Endothelial cell of umbilical vein (primary cell): ENCODE measurements at regions of chr12 and their contacts with region 1.

Region 1: GRCh38 chr12:53321074-53321814 is at the start of gene AAAS:
- DNase-seq: peak; percentile 97
- H3K4me3 ChIP-seq: peak within 1 kb of the TSS; percentile 65 to 81 (median 68)
- H3K27ac ChIP-seq: peak within 1 kb of the TSS; percentile 74
- H3K4me1 ChIP-seq: peaks cover 24% of the 10 kb centered on the region
- H3K27me3 ChIP-seq: no peaks in the 10 kb centered on the region
- CTCF ChIP-seq: peak; percentile 99 to 100
- POLR2A ChIP-seq: peak; percentile 69
- total RNA-seq, gene AAAS: 57.8 and 60.0 TPM in 2 replicates

Region 2: DNA sequence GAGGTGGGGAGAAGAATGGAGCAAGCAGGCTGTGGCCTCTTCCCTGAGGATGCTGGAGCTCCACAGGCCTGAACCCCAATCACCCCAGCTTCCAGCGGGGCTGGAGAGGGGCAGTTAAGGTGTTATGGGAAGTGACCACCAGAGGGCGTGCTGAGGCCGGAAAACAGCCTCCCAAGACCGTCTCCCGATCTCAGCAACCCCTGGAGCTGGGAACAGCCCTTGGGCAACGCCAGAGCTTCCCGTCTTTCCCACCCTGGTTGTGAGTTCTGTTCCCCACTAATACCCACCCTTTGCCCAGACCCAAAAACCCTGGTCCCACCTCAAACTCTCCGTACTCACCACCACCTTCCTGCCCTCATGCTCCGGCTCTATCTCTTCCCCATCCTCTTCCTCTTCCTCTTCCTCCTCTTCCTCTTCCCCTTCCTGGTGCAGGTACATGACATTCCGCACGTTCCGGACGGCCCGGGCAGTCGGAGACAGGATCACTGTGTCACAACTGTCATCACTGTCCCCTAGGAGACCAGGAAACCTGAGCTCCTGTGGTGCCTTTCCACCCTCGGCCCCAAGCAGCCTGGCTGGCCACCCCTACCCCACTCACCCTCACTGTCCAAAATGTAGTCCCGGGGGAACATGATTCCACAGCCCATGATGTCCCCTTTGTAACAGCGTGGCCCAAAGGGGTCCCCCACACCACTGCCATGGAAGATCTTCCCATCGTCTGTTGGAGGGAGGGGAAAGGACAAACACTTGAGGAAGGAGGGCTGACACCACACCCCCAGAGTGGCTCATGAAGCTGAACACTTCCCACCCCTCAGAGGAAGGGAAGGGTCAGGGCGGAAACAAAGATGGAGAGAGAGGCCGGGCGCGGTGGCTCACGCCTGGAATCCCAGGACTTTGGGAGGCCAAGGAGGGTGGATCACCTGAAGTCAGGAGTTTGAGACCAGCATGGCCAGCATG is 255.0 kb before region 1 on chr12:
- CTCF ChIA-PET with region 1: interaction called, 16 read pairs
- POLR2A ChIA-PET with region 1: no interaction called
- dilution Hi-C with region 1: no loop called
- intact Hi-C with region 1: no loop called
- DNase-seq: peak; percentile 65
- H3K4me3 ChIP-seq: no peak overlapping the region
- H3K27ac ChIP-seq: peak overlapping the region; percentile 44
- H3K4me1 ChIP-seq: peaks cover 22% of the 10 kb centered on the region
- H3K27me3 ChIP-seq: no peaks in the 10 kb centered on the region
- CTCF ChIP-seq: peak; percentile 85 to 90
- POLR2A ChIP-seq: peak; percentile 39

Region 3: DNA sequence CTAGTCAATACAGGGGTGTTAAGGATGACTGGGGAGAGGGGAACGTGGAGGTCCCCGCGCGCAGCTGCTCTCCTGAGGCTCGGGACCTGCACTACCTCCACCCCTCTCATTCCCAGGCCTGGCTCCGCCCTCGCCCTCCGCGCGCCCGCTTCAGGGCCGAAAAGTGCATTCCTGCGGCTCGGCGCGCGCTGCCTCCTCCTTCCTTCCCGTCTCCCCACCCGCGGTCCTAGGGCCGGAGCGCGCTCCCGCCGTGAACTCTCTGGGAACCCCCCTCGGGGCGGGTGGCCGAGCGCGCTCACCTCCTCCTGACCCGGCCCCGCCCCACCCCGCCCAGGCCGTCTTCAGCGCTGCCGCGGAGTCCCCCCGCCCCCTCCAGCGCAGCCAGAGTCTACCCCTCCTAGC is 100.4 kb before region 1 on chr12:
- CTCF ChIA-PET with region 1: interaction called, 144 read pairs
- POLR2A ChIA-PET with region 1: no interaction called
- dilution Hi-C with region 1: no loop called
- intact Hi-C with region 1: loop called (anchors 2 kb)
- DNase-seq: peak; percentile 87
- H3K4me3 ChIP-seq: peak overlapping the region; percentile 45 to 66 (median 63)
- H3K27ac ChIP-seq: peak overlapping the region; percentile 88
- H3K4me1 ChIP-seq: peaks cover 49% of the 10 kb centered on the region
- H3K27me3 ChIP-seq: no peaks in the 10 kb centered on the region
- CTCF ChIP-seq: no peak
- POLR2A ChIP-seq: peak; percentile 51

Region 4: GRCh38 chr12:53308276-53308675 is 13.0 kb before region 1 on chr12:
- CTCF ChIA-PET with region 1: interaction called, 16 read pairs
- POLR2A ChIA-PET with region 1: interaction called, 3 read pairs
- dilution Hi-C with region 1: no loop called
- intact Hi-C with region 1: no loop called
- DNase-seq: no peak
- H3K4me3 ChIP-seq: no peak overlapping the region
- H3K27ac ChIP-seq: no peak overlapping the region
- H3K4me1 ChIP-seq: no peaks in the 10 kb centered on the region
- H3K27me3 ChIP-seq: no peaks in the 10 kb centered on the region
- CTCF ChIP-seq: no peak
- POLR2A ChIP-seq: no peak

Region 5: GRCh38 chr12:53352331-53353256 is 31.4 kb after region 1 on chr12:
- CTCF ChIA-PET with region 1: interaction called, 41 read pairs
- POLR2A ChIA-PET with region 1: no interaction called
- dilution Hi-C with region 1: no loop called
- intact Hi-C with region 1: no loop called
- DNase-seq: peak; percentile 84
- H3K4me3 ChIP-seq: no peak overlapping the region
- H3K27ac ChIP-seq: no peak overlapping the region
- H3K4me1 ChIP-seq: peaks cover 2% of the 10 kb centered on the region
- H3K27me3 ChIP-seq: no peaks in the 10 kb centered on the region
- CTCF ChIP-seq: peak; percentile 73 to 79
- POLR2A ChIP-seq: no peak

Region 6: GRCh38 chr12:53391729-53392128 is 70.5 kb after region 1 on chr12:
- CTCF ChIA-PET with region 1: no interaction called
- POLR2A ChIA-PET with region 1: no interaction called
- dilution Hi-C with region 1: no loop called
- intact Hi-C with region 1: no loop called
- DNase-seq: no peak
- H3K4me3 ChIP-seq: no peak overlapping the region
- H3K27ac ChIP-seq: no peak overlapping the region
- H3K4me1 ChIP-seq: peaks cover 14% of the 10 kb centered on the region
- H3K27me3 ChIP-seq: no peaks in the 10 kb centered on the region
- CTCF ChIP-seq: no peak
- POLR2A ChIP-seq: no peak

Region 7: DNA sequence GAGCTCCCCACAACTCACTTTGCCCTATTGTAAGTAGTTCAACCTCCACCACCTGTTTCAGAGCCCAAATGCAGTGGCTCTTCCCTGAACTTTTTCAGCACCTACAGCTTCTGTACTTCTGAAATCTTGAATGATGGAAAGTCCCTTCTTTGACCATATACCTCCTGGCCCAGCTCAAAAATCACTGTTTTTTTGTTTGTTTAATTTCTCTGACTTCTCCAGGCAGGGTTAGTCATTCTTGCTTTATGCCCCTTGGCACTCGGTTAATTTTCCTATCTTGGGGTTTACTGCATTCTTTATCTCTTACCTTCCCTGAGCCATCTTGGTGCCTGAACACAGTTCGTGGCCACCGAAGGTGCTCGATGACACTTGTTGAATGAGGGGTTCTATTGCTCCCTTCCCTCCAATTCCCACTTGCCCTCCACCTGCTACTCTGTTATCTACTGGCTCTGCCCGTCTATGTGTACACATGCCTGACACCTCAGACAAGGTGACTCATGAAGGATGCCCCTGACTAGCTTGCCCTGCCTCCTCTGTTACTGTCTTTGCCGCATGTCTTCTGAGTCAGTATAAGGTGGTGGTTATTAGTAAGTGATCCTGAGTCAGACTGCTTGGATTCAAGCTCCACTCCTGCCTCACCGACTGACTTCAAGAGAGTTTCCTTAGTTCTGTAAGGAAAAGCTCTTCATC is 106.8 kb after region 1 on chr12:
- CTCF ChIA-PET with region 1: interaction called, 12 read pairs
- POLR2A ChIA-PET with region 1: no interaction called
- dilution Hi-C with region 1: no loop called
- intact Hi-C with region 1: no loop called
- DNase-seq: no peak
- H3K4me3 ChIP-seq: no peak overlapping the region
- H3K27ac ChIP-seq: no peak overlapping the region
- H3K4me1 ChIP-seq: no peaks in the 10 kb centered on the region
- H3K27me3 ChIP-seq: no peaks in the 10 kb centered on the region
- CTCF ChIP-seq: no peak
- POLR2A ChIP-seq: no peak

Region 8: DNA sequence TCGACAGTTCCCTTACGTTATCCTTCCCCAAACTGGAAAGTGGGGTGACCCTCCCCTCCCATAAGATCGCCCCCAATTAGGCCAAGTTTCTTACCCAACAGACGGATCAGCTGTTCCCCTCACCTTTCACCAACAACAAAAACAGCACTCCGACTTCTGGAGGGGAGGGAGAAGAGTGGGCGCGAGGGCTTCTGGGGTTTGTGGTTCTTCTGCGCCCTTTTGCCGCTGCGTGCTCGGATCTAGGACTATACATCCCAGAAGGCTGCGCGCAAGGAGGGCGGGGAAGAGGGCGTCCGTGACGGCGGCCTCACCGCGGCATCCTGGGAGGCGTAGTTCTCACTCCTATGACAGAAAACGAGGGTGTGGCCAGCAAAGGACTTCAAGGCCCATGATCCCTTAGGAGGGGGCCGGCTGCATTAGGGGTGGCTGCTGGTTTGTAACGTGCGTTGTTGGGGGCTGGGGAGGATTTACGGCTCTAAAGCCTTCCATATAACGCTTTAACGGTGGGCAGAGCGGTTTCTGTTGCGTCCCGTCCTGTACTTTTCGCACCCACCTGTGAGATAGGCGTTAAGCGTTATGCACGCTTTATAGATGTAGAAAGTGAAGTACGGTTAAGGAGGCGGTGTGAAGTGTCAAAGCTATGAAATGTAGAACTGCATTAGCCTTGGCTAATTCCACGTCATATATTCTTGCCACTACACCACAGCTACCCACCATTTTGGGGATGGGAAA is 406.2 kb after region 1 on chr12 and contains the start of gene CALCOCO1:
- CTCF ChIA-PET with region 1: no interaction called
- POLR2A ChIA-PET with region 1: no interaction called
- dilution Hi-C with region 1: no loop called
- intact Hi-C with region 1: no loop called
- DNase-seq: peak; percentile 100
- H3K4me3 ChIP-seq: peak within 1 kb of the TSS; percentile 44 to 85 (median 56)
- H3K27ac ChIP-seq: peak within 1 kb of the TSS; percentile 4
- H3K4me1 ChIP-seq: peaks cover 14% of the 10 kb centered on the region
- H3K27me3 ChIP-seq: peaks cover 4 to 8% of the 10 kb centered on the region in 2 experiments
- CTCF ChIP-seq: no peak
- POLR2A ChIP-seq: peak; percentile 73
- total RNA-seq, gene CALCOCO1: 61.8 and 70.9 TPM in 2 replicates